Left cardiac atrium (tissue), 4 donors: ENCODE measurements at regions of chr9 and their contacts with region 1.

Region 1: GRCh38 chr9:2158111-2158610 is 143.0 kb downstream of the SMARCA2 start:
- DNase-seq: peak; percentile 56
- ATAC-seq: peak; percentile 45 to 62

Region 2: GRCh38 chr9:2241836-2242741 is 83.9 kb after region 1 on chr9:
- intact Hi-C with region 1: loop called in 1 of 2 experiments (anchors 10 kb)
- DNase-seq: peak; percentile 80
- ATAC-seq: peak; percentile 93 to 97